ENCODE measurements at regions of chr3 and their contacts with region 1.

Region 1: DNA sequence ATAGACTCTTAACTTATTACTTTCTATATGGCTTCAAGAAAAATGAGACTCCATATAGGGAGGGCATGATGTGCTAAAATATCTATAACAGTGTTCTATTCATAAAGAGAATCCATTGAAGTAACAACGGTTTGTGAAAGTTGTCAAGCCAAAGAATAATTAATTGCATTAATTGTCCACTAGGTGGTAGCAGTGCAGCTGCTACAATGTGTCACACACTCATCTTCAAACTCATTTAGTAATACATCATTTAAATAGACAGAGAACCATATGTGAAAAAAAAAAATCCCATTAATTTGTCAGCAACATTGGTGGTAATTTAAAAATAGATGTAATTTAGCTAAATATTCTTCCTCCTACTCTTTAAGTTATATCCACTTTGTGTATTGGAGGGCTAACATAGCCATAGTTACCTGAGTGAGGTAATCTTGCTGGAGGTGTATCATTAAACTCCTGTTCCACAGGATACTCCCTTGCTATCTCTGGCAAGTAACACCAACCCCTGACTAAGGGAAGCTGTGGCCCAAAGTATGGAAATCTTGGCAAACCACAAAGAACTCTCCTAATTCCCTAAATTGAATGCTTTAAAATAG is 3.7 kb upstream of the CPA3 start:
- DNase-seq: no peak
- H3K4me3 Mint-ChIP-seq: no peak overlapping the region
- H3K27ac Mint-ChIP-seq: no peak overlapping the region
- H3K4me1 Mint-ChIP-seq: no peaks in the 10 kb centered on the region
- H3K27me3 Mint-ChIP-seq: peaks cover 20% of the 10 kb centered on the region

Region 2: DNA sequence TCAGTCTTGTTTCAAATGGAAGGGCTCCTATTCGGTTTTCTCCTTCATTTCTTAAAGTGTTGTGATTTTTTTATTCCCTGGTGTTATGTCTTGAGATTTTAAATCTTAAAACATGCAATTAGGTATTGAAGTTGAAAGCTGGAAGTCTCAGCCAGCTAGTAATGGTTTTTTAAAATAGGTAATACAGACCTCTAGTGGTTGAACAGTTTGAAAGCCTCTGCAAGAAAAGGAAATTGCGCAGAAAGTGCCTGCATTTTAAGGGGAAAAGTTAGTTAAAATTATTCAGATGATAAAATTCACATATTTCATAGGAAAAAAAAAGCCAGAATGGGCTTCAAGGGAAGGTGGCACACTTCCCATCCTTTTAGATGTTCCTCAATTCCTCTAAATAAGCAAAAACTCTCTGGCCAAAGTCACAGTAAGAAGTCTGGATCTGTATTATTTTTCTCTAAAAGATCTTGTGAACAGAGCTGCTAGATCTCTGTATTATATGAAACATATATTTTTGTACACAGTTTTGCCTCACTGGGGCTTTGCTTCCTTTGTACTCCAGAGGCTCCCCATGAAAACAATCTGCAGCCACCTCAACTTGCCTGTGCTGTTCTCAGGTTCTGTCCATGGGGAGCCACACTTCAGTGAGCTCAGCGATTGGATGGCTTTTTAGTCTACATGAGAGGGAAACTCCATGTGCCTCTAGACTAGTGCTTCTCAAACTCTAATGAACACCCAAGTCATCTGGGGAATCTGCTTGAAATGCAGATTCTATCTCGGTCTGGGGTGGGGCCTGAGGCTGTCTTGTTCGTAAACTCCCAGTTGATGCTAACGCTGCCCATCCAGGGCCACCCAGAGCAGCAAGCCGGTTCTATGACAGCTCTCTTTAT is 142.2 kb before region 1 on chr3:
- CTCF ChIA-PET with region 1: no interaction called
- POLR2A ChIA-PET with region 1: no interaction called
- DNase-seq: no peak
- H3K4me3 Mint-ChIP-seq: no peak overlapping the region
- H3K27ac Mint-ChIP-seq: no peak overlapping the region
- H3K4me1 Mint-ChIP-seq: no peaks in the 10 kb centered on the region
- H3K27me3 Mint-ChIP-seq: no peaks in the 10 kb centered on the region

Region 3: DNA sequence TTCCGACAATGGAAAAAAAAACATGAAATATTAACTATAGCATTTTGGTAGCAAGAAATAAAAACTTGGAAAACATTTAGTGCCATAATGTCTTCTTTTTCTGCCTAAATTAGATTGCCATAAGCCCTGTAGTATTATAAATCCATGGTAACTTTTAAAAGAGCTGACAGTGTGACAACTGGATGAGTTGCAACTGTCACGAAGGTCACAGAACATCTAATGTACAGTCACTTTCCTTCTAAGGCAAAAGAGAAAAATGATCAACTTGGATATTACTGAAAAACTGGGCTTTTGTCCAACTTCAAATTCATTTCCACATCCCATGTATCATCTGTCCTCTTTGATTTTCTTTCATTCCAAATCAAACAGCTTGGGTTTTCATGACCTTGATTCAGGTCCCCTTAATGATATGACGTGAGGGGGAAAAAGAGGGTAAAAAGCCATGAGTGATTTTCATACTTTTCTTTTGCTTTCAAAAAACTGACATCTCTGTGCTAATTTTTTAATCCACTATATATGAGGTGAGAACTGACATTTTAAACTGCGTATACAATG is 33.2 kb before region 1 on chr3:
- CTCF ChIA-PET with region 1: no interaction called
- POLR2A ChIA-PET with region 1: no interaction called
- DNase-seq: no peak
- H3K4me3 Mint-ChIP-seq: no peak overlapping the region
- H3K27ac Mint-ChIP-seq: no peak overlapping the region
- H3K4me1 Mint-ChIP-seq: no peaks in the 10 kb centered on the region
- H3K27me3 Mint-ChIP-seq: peaks cover 2% of the 10 kb centered on the region

Region 4: GRCh38 chr3:148903941-148904340 is 42.6 kb after region 1 on chr3:
- CTCF ChIA-PET with region 1: no interaction called
- POLR2A ChIA-PET with region 1: no interaction called
- DNase-seq: no peak
- H3K4me3 Mint-ChIP-seq: no peak overlapping the region
- H3K27ac Mint-ChIP-seq: no peak overlapping the region
- H3K4me1 Mint-ChIP-seq: no peaks in the 10 kb centered on the region
- H3K27me3 Mint-ChIP-seq: peaks cover 6% of the 10 kb centered on the region

Region 5: DNA sequence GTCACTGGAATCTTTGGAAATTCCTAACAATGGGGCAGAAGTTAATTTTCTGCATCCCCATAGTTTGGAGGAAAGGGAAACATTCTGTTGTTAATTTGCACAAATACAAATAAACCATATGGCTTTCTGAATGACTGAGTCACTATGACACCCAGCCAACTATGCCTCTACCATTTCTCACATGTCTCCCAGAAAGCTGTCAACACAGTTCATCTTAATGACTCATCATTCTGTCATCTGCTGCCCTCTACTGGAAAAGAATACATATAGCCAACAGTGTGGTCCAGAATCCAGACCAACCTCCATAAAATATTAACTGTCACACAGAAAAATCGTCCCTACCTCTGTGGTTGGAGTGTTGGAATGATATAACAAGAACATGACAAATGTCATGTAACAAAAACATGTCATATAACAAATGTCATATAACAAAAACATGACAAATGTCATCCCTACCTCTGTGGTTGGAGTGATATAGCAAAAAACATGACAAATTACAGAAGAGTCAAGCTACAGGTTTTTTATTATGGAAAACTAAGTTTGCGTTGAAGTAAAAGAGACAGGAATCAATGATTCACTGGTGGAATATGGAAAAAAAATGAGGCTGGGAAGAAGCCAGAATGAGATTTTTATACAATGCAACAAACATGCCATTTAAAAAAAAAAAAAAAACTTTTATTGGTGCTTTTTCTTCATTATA is 82.3 kb after region 1 on chr3:
- CTCF ChIA-PET with region 1: interaction called, 31 read pairs
- POLR2A ChIA-PET with region 1: no interaction called
- DNase-seq: no peak
- H3K4me3 Mint-ChIP-seq: no peak overlapping the region
- H3K27ac Mint-ChIP-seq: no peak overlapping the region
- H3K4me1 Mint-ChIP-seq: no peaks in the 10 kb centered on the region
- H3K27me3 Mint-ChIP-seq: peaks cover 5% of the 10 kb centered on the region

Region 6: GRCh38 chr3:148948913-148949657 is 87.7 kb after region 1 on chr3:
- CTCF ChIA-PET with region 1: interaction called, 31 read pairs
- POLR2A ChIA-PET with region 1: no interaction called
- DNase-seq: no peak
- H3K4me3 Mint-ChIP-seq: no peak overlapping the region
- H3K27ac Mint-ChIP-seq: no peak overlapping the region
- H3K4me1 Mint-ChIP-seq: no peaks in the 10 kb centered on the region
- H3K27me3 Mint-ChIP-seq: peaks cover 2% of the 10 kb centered on the region